ENCODE measurements at regions of chr17 and their contacts with region 1.

Region 1: GRCh38 chr17:75524953-75525719 is at the start of gene LLGL2:
- DNase-seq: peak; percentile 60 to 89 (median 75)
- ATAC-seq: peak; percentile 35 to 86 (median 82)
- H3K4me3 ChIP-seq: peak within 1 kb of the TSS; percentile 28 to 83 (median 71)
- H3K27ac ChIP-seq: peak within 1 kb of the TSS in 11 of 12 donors; percentile 27 to 78 (median 72)
- H3K4me1 ChIP-seq: peaks cover 0 to 22% (median 12%) of the 10 kb centered on the region in 12 donors
- H3K27me3 ChIP-seq: peaks cover 0 to 6% (median 0%) of the 10 kb centered on the region in 9 donors
- CTCF ChIP-seq: peak; percentile 31 to 69 (median 50)
- POLR2A ChIP-seq: no peak
- total RNA-seq, gene LLGL2: 1.8 to 5.9 (median 3.4) TPM

Region 2: DNA sequence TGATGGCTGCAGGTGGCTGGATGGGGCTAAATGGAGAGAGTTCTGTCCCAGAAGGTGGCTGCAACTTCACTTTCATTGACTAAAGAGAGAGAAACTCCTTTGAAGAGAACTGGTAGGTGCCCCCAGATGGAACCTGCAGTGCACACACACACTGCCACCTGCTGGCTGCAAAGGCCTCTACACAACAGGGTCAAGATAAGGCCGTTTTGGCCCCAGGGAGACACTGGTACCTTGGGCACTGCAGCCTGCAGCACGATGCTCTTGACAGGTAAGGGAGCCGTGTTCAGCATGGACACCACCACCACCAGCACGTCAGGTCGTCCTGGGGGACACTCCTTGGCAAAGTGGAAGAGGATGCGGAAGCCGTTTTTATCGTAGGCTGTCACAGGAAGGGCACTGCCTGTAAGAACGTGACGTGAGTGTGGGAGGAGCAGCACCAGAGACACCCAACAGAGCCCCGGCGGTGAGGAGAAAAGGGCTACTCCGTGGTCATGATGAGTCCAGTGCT is 286.4 kb before region 1 on chr17:
- intact Hi-C with region 1: no loop called
- DNase-seq: peak; percentile 48 to 79 (median 49)
- ATAC-seq: peak; percentile 45 to 66 (median 56)
- H3K4me3 ChIP-seq: no peak overlapping the region
- H3K27ac ChIP-seq: peak overlapping the region in 3 of 12 donors; percentile 11 to 56 (median 14)
- H3K4me1 ChIP-seq: peaks cover 0 to 41% (median 9%) of the 10 kb centered on the region in 12 donors
- H3K27me3 ChIP-seq: no peaks in the 10 kb centered on the region
- CTCF ChIP-seq: peak; percentile 64 to 84 (median 78)
- POLR2A ChIP-seq: no peak

Region 3: DNA sequence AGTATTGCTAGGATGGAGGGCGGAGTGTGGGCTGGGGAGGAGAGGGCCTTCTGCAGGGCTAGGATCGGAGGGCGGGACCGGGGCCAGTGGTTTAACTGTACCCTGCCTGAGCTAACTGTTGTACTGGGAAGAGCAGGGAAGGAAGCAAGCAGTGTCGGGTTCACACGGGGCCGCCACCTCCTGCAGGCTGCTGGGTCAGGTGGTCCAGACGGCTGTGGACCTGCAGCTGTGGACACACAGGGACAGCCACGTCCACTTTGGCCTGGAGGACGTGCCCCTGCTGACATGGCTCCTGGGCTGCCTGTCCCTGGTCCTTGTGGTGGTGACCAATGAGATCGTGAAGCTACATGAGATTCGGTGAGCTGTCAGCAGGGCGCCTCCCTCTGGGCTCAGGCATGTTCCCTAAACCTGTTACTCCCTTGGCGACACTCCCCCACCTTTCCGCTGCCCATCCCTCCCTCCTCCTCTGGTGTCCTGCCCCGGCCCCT is 26.4 kb before region 1 on chr17:
- intact Hi-C with region 1: no loop called
- DNase-seq: peak in 1 of 5 donors; percentile 65
- ATAC-seq: peak in 2 of 4 donors; percentile 3 to 16
- H3K4me3 ChIP-seq: no peak overlapping the region
- H3K27ac ChIP-seq: peak overlapping the region in 10 of 12 donors; percentile 45 to 75 (median 59)
- H3K4me1 ChIP-seq: peaks cover 0 to 43% (median 19%) of the 10 kb centered on the region in 12 donors
- H3K27me3 ChIP-seq: no peaks in the 10 kb centered on the region
- CTCF ChIP-seq: no peak
- POLR2A ChIP-seq: no peak

Region 4: DNA sequence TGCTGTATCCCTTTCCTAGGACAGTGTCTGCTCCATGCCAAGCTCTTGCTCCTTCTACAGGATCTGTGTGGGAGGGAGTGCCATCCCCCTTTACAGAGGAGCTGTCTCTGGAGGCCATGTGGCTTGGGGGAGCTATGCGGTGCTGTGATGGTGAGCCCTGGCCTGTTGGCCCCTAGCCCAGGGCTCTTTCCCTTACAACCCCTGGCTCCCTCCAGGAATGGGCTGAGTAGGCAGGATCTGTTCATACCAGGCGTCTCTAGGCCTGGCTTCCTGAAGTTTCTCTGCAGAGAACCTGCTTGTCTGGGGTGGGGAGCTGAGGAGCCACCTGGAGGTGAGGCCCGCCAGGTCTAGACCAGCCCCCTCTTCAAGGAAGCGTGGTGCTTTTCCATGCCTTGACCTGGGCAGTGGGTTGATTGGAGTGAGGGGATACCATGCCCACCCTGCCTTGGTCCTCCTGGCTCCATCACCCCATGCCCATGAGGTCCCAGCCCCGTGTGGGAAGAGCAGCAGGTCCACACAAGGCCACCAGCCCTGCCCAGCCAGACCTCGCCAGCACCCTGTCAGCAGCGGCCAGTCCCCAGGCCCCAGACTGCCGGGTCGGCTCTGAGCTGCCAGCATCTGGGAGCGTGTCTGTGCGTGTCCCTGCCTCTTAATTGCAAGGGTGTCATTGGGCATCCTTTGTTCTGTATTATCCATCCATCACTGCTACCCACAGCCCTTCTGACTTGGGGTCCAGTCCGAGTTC is 15.0 kb after region 1 on chr17:
- intact Hi-C with region 1: no loop called
- DNase-seq: no peak
- ATAC-seq: peak; percentile 23 to 50 (median 34)
- H3K4me3 ChIP-seq: no peak overlapping the region
- H3K27ac ChIP-seq: no peak overlapping the region
- H3K4me1 ChIP-seq: no peaks in the 10 kb centered on the region
- H3K27me3 ChIP-seq: no peaks in the 10 kb centered on the region
- CTCF ChIP-seq: no peak
- POLR2A ChIP-seq: no peak

Region 5: GRCh38 chr17:75589012-75589918 is 64.1 kb after region 1 on chr17:
- intact Hi-C with region 1: loop called in 4 of 10 experiments (anchors 2 to 10 kb)
- DNase-seq: peak; percentile 96 to 98 (median 98)
- ATAC-seq: peak; percentile 89 to 95 (median 90)
- H3K4me3 ChIP-seq: peak overlapping the region; percentile 34 to 92 (median 75)
- H3K27ac ChIP-seq: peak overlapping the region; percentile 85 to 98 (median 95)
- H3K4me1 ChIP-seq: peaks cover 0 to 29% (median 14%) of the 10 kb centered on the region in 12 donors
- H3K27me3 ChIP-seq: no peaks in the 10 kb centered on the region
- CTCF ChIP-seq: peak; percentile 20 to 89 (median 64)
- POLR2A ChIP-seq: peak in 1 of 2 donors; percentile 67

Region 6: GRCh38 chr17:75667021-75667790 is 142.1 kb after region 1 on chr17 and contains the starts of genes RECQL5 and SAP30BP:
- intact Hi-C with region 1: no loop called
- DNase-seq: peak; percentile 98 to 99 (median 99)
- ATAC-seq: peak; percentile 100
- H3K4me3 ChIP-seq: peak within 1 kb of the TSS; percentile 70 to 100 (median 88)
- H3K27ac ChIP-seq: peak within 1 kb of the TSS; percentile 63 to 90 (median 86)
- H3K4me1 ChIP-seq: peaks cover 0 to 33% (median 21%) of the 10 kb centered on the region in 12 donors
- H3K27me3 ChIP-seq: no peaks in the 10 kb centered on the region
- CTCF ChIP-seq: no peak
- POLR2A ChIP-seq: peak in 1 of 2 donors; percentile 82
- total RNA-seq, gene RECQL5: 6.0 to 15.9 (median 10.2) TPM
- total RNA-seq, gene SAP30BP: 40.9 to 67.8 (median 54.4) TPM

Measured in heart left ventricle (tissue), 16 donors.